ENCODE measurements at regions of chr7 and their contacts with region 1.

Region 1: DNA sequence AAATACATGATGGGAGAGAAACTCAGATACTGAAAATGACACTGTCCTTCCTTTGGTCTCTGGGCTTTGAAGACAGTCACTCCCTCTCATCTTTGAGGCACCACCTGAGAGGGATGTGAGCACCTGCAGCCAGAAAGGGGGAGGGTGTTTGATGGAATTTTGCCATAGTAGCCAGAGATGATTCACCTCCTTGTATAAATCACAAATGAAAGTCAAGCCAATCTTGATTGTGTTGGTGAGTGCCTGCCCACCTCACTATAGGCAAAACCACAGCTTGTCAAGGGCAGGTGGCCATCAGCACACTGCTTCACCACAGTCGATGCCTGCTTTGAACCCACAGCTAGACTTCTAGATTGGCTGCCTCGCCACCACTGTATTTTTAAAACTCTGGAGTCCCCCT is 48.2 kb downstream of the PON1 start:
- DNase-seq: no peak
- H3K4me3 ChIP-seq: no peak overlapping the region
- H3K4me3 Mint-ChIP-seq: no peak overlapping the region
- H3K27ac Mint-ChIP-seq: no peak overlapping the region
- H3K4me1 ChIP-seq: no peaks in the 10 kb centered on the region
- H3K4me1 Mint-ChIP-seq: no peaks in the 10 kb centered on the region
- H3K27me3 ChIP-seq: no peaks in the 10 kb centered on the region
- H3K27me3 Mint-ChIP-seq: no peaks in the 10 kb centered on the region
- CTCF ChIP-seq: no peak

Region 2: GRCh38 chr7:95263785-95264575 is 12.1 kb before region 1 on chr7:
- CTCF ChIA-PET with region 1: no interaction called
- POLR2A ChIA-PET with region 1: no interaction called
- intact Hi-C with region 1: no loop called
- DNase-seq: no peak
- H3K4me3 ChIP-seq: no peak overlapping the region
- H3K4me3 Mint-ChIP-seq: no peak overlapping the region
- H3K27ac Mint-ChIP-seq: no peak overlapping the region
- H3K4me1 ChIP-seq: no peaks in the 10 kb centered on the region
- H3K4me1 Mint-ChIP-seq: no peaks in the 10 kb centered on the region
- H3K27me3 ChIP-seq: no peaks in the 10 kb centered on the region
- H3K27me3 Mint-ChIP-seq: no peaks in the 10 kb centered on the region
- CTCF ChIP-seq: no peak

Region 3: DNA sequence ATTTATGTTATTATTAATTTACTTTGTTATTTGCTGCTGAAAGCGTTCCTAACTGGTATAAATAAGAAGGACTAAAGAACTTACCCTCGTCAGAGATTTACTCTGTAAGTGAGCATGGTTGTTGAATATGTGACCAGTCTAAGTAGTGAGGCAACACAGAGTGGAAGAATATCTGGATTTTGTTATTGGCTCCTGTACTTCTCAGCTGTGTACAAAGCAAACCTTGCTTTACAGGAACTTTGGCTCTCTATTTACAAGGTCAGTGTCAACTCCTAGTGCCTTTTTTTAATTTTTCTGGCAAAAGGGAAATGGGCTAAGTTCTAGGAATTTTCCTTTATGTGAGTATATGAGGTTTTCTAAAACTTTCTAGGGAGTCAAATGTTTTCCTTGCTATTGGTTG is 284.6 kb after region 1 on chr7:
- CTCF ChIA-PET with region 1: no interaction called
- POLR2A ChIA-PET with region 1: interaction called, 11 read pairs
- intact Hi-C with region 1: no loop called
- DNase-seq: no peak
- H3K4me3 ChIP-seq: no peak overlapping the region
- H3K4me3 Mint-ChIP-seq: no peak overlapping the region
- H3K27ac Mint-ChIP-seq: no peak overlapping the region
- H3K4me1 ChIP-seq: no peaks in the 10 kb centered on the region
- H3K4me1 Mint-ChIP-seq: no peaks in the 10 kb centered on the region
- H3K27me3 ChIP-seq: no peaks in the 10 kb centered on the region
- H3K27me3 Mint-ChIP-seq: peaks cover 8% of the 10 kb centered on the region
- CTCF ChIP-seq: no peak

Measured in Caco-2 (cell line).